Psoas muscle (tissue), 8 donors: ENCODE measurements at regions of chr6 and their contacts with region 1.

Region 1: DNA sequence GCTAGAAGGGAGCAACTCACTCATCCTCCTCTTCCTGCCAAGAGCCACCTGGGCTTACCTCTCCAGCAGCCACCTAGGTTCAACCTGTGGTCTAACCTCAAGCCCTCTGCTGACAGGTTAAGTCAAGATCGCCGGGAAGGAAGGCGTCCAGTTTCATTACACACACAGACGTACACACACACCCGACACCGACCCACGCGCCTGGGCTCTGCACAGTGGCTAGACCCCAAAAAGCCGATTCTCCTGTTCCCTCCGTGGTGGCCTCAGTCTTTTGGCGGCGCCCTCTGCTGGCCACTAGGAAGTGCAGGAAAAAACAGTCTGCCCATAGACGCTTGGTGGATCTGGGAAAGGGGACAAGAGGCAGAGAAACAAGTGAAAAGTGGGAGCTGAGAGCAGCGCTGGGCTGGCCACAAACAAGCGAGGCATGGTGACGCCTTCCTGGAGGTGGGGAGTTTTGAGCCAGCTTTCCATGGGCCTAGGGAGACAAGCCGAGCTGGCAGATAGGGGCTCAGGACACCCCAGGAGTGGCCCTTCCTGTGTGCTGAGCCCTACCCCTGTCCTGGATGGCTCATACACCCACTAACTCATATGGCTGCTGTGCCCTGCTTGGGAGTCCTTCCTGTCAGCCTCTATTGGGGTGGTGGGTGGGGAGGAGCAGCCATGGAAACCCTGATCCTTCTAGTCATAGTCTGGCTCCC is 52.7 kb downstream of the MRPL14 start:
- DNase-seq: peak; percentile 75 to 86
- ATAC-seq: peak; percentile 69 to 80 (median 72)
- H3K4me3 ChIP-seq: peak overlapping the region; percentile 72
- H3K27ac ChIP-seq: peak overlapping the region; percentile 90
- H3K4me1 ChIP-seq: peaks cover 26% of the 10 kb centered on the region
- H3K27me3 ChIP-seq: no peaks in the 10 kb centered on the region
- CTCF ChIP-seq: peak; percentile 91

Region 2: DNA sequence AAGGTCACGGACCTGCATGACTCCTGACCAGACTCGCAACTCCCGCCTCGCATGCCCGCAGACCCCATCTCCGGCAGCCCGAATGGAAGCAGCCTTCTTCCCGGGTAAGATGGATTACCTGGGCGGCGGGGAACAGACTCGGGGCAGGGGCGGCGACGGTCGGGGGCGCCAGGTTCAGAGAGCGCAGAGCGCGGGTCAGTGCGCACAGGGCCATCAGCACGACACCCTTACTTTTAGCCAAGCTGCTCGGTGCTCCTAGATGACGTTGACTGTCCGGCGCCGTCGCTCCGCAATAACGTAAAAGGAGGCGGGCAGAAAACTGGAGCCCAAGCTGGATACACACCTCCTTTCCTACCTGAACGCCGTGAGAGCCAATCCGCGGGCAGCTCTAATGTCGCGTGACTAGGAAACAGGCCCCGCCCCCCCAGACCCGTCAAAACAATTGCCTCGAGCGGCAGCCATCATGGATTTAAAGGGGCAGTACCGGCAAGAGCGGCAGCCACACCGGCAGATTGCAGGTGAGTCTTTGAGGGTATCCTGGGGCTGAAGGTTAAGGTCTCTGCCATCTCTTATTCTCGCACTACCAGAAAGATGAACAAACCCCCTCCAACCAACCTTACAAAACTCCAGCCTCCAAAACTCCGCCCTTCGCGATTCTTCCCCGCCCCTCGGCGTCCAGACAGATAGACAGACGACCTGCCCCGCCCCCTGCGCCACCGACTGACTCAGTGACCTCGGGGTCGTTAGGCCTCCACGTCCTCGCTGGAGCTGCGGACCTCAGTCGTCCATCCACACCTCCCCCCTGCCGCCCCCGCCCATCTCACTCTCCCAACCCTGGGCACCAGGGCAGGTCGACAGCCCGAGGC is 1015.2 kb before region 1 on chr6 and contains the starts of genes KLC4 and MRPL2:
- intact Hi-C with region 1: no loop called
- DNase-seq: peak; percentile 98 to 99
- ATAC-seq: peak; percentile 96 to 99 (median 96)
- H3K4me3 ChIP-seq: peak within 1 kb of the TSS; percentile 85
- H3K27ac ChIP-seq: peak within 1 kb of the TSS; percentile 92
- H3K4me1 ChIP-seq: peaks cover 20% of the 10 kb centered on the region
- H3K27me3 ChIP-seq: no peaks in the 10 kb centered on the region
- CTCF ChIP-seq: no peak
- total RNA-seq, gene KLC4: 13.0 to 20.9 (median 15.0) TPM
- total RNA-seq, gene MRPL2: 61.3 to 138 (median 94.5) TPM

Region 3: GRCh38 chr6:43629505-43630300 is 444.9 kb before region 1 on chr6:
- intact Hi-C with region 1: loop called in 1 of 2 experiments (anchors 10 kb)
- DNase-seq: peak; percentile 95 to 97
- ATAC-seq: peak; percentile 85 to 90 (median 86)
- H3K4me3 ChIP-seq: peak overlapping the region; percentile 89
- H3K27ac ChIP-seq: peak overlapping the region; percentile 95
- H3K4me1 ChIP-seq: peaks cover 26% of the 10 kb centered on the region
- H3K27me3 ChIP-seq: no peaks in the 10 kb centered on the region
- CTCF ChIP-seq: no peak

Region 4: GRCh38 chr6:43723737-43724295 is 350.8 kb before region 1 on chr6:
- intact Hi-C with region 1: loop called in 1 of 2 experiments (anchors 2 kb)
- DNase-seq: peak in 1 of 2 donors; percentile 63
- ATAC-seq: peak; percentile 61 to 80 (median 74)
- H3K4me3 ChIP-seq: no peak overlapping the region
- H3K27ac ChIP-seq: no peak overlapping the region
- H3K4me1 ChIP-seq: no peaks in the 10 kb centered on the region
- H3K27me3 ChIP-seq: no peaks in the 10 kb centered on the region
- CTCF ChIP-seq: peak; percentile 37

Region 5: DNA sequence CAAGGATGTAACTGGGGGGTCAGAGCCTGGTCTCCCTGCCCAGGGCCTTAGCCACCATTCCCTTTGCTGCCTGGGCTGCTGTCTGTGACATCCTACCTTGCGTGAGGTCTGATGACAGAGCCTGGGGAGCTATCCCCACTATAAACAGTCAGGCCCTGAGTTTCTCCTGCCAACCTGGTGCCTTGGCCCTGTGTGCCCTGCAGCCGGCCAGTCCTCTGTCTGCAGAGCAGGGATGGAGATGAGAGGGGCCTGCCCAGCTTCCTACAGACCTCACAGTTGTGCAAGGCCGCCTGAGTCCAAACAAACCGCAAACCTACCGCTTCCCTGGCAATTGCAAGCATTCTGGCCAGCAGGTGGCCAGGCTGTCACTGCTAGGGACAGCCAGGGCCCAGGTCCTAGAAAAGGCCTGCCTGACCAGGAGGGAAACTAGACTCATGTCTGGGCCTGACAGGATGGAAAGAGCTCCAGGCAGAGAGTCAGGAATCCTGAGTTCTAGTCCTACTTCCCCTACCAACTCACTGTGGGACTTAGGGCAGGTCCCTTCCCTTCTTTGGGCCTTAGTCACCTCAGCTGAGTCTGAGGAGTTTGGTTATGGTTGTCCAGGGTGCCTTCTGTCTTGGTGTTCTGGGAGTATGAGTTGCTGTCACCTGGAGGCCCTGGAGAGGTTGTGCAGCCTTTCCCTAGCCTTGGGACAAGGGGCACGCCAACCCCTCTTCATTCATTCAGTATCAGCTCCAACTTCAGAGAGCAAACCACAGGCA is 218.4 kb before region 1 on chr6:
- intact Hi-C with region 1: loop called (anchors 1 to 10 kb)
- DNase-seq: peak; percentile 57 to 72
- ATAC-seq: peak; percentile 91 to 96 (median 92)
- H3K4me3 ChIP-seq: no peak overlapping the region
- H3K27ac ChIP-seq: peak overlapping the region; percentile 68
- H3K4me1 ChIP-seq: no peaks in the 10 kb centered on the region
- H3K27me3 ChIP-seq: no peaks in the 10 kb centered on the region
- CTCF ChIP-seq: peak; percentile 53

Region 6: DNA sequence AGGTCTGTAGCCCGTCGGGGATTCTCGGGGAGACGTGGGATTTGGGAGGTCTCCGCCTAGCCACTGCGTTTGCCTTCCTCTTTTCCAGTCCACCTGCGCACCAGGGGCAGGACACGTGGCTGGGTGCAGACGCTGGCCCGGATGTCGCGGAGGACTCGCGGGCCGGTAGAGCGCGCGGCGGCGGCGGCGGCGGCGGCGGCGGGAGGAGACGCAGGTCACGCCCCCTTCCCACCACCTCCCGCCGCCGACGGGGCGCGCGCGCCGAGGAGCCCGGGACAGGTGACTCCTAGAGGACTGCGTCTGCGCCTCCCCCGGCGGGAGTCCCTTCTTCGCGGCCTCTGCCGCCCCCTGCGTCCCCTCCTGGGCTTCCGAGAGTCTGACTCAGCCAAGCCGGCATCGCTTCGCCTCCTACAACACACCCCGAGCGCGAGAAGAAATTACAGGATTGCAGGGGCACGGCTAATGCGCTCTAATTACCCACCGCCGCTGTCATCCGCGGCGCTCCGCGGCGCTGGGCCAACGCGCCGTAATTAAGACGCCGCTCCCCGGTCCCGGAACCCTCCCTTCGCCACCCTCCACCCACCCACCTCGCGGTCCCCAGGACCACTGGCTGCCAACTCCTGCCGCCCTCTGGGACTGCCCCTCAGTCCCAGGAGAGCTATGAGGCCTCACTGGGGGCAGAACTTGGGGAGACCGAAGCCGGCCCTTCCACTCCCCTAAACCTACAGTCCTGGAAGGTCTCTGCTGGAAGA is 71.8 kb before region 1 on chr6:
- intact Hi-C with region 1: loop called (anchors 5 kb)
- DNase-seq: peak; percentile 70 to 81
- ATAC-seq: peak; percentile 55 to 70 (median 67)
- H3K4me3 ChIP-seq: peak overlapping the region; percentile 62
- H3K27ac ChIP-seq: peak overlapping the region; percentile 81
- H3K4me1 ChIP-seq: peaks cover 46% of the 10 kb centered on the region
- H3K27me3 ChIP-seq: no peaks in the 10 kb centered on the region
- CTCF ChIP-seq: peak; percentile 7

Region 7: DNA sequence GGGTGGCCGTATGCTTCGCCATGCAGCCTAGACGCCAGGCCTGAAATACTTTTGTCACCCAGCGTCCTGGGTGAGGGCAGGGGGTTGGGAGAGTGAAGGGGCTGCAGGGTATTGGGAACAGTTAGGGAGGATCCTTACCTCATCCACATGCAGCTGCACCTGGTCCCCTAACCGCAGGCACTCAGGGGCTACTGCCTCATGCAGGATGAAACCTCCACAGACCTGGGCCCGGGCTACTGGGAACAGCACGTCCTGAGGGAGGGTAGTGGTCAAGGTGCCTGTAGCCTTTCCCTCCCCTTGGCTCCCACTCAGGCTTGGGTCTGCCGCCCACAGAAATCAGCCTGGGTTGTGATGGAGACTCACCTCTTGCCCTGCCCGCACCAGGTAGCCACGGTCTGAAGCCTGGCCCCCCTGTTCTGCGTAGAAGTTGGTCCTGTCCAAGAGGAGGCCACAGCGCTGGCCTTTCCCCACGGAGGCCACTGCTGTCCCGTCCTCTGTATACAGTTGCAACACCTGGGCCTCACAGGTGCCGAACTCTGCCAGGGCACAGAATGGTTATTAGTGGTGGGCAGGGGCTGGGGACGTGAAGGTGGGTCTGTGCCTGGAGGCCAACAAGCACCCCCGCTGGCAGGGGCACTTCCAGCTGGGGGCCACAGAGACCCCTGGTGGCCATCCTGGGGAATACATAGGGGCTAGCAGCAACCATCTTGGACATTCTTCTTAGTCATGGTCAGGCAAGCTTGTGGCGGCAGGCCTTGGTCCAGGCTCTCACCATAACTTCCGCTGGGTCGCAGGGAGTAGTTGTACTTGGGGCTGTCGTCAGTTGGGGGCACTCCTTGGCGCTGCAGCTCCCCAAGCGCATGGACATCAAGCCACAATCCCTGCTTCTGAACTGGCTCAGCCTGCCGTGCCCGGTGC is 230.0 kb after region 1 on chr6:
- intact Hi-C with region 1: no loop called
- DNase-seq: peak; percentile 30 to 61
- ATAC-seq: peak; percentile 48 to 77 (median 60)
- H3K4me3 ChIP-seq: no peak overlapping the region
- H3K27ac ChIP-seq: no peak overlapping the region
- H3K4me1 ChIP-seq: no peaks in the 10 kb centered on the region
- H3K27me3 ChIP-seq: no peaks in the 10 kb centered on the region
- CTCF ChIP-seq: peak; percentile 65